Endothelial cell of umbilical vein (primary cell): ENCODE measurements at regions of chr4 and their contacts with region 1.

Region 1: GRCh38 chr4:156968479-156968984 is 3.1 kb downstream of the PDGFC start:
- DNase-seq: peak; percentile 81
- H3K4me3 ChIP-seq: no peak overlapping the region
- H3K27ac ChIP-seq: peak overlapping the region; percentile 20
- H3K4me1 ChIP-seq: peaks cover 30% of the 10 kb centered on the region
- H3K27me3 ChIP-seq: no peaks in the 10 kb centered on the region
- CTCF ChIP-seq: peak; percentile 64 to 77
- POLR2A ChIP-seq: no peak

Region 2: DNA sequence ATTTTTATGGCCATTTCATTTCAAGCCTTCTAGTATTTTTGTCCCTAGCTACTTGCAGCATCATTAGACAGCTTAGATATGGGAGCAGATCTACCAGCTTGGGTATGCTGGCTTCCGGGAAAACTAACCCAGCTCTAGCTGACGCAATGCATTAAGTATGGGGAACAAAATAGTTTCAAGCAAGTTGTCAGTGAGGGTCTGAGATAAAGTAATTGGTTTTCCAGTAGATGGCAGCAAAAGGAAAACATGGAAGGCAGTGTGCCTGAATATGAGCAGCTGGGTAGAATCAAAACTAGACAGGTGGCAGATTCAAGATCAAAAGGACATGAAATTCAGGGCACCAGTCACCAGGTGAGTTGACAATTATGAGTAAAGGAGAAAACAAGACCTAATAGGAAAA is 674.0 kb before region 1 on chr4:
- CTCF ChIA-PET with region 1: no interaction called
- POLR2A ChIA-PET with region 1: no interaction called
- dilution Hi-C with region 1: no loop called
- intact Hi-C with region 1: loop called (anchors 1 kb)
- DNase-seq: peak; percentile 43
- H3K4me3 ChIP-seq: no peak overlapping the region
- H3K27ac ChIP-seq: peak overlapping the region; percentile 29
- H3K4me1 ChIP-seq: peaks cover 7% of the 10 kb centered on the region
- H3K27me3 ChIP-seq: no peaks in the 10 kb centered on the region
- CTCF ChIP-seq: no peak
- POLR2A ChIP-seq: no peak

Region 3: GRCh38 chr4:156638334-156638733 is 330.2 kb before region 1 on chr4:
- CTCF ChIA-PET with region 1: no interaction called
- POLR2A ChIA-PET with region 1: no interaction called
- dilution Hi-C with region 1: no loop called
- intact Hi-C with region 1: no loop called
- DNase-seq: no peak
- H3K4me3 ChIP-seq: no peak overlapping the region
- H3K27ac ChIP-seq: no peak overlapping the region
- H3K4me1 ChIP-seq: no peaks in the 10 kb centered on the region
- H3K27me3 ChIP-seq: no peaks in the 10 kb centered on the region
- CTCF ChIP-seq: no peak
- POLR2A ChIP-seq: no peak

Region 4: DNA sequence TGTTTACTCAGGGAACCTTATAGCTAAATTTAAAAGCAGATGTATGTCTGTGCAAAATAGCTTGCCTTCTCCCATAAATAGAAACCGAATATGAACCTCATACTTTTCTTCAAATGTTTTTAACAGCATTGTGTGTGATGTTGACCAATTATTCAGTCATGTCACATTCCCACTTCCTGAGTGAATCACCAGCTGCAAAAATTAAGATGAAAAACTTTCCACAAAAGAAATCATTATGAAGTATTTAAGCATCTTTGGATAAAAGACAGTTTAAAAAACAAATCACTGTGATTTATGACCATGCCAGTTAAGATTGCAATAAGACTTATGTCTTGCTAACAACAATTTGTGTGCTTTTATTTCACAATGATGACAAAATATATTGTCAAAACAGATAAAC is 217.0 kb before region 1 on chr4:
- CTCF ChIA-PET with region 1: interaction called, 4 read pairs
- POLR2A ChIA-PET with region 1: no interaction called
- dilution Hi-C with region 1: no loop called
- intact Hi-C with region 1: loop called (anchors 5 kb)
- DNase-seq: peak; percentile 65
- H3K4me3 ChIP-seq: no peak overlapping the region
- H3K27ac ChIP-seq: no peak overlapping the region
- H3K4me1 ChIP-seq: peaks cover 7% of the 10 kb centered on the region
- H3K27me3 ChIP-seq: no peaks in the 10 kb centered on the region
- CTCF ChIP-seq: no peak
- POLR2A ChIP-seq: no peak

Region 5: DNA sequence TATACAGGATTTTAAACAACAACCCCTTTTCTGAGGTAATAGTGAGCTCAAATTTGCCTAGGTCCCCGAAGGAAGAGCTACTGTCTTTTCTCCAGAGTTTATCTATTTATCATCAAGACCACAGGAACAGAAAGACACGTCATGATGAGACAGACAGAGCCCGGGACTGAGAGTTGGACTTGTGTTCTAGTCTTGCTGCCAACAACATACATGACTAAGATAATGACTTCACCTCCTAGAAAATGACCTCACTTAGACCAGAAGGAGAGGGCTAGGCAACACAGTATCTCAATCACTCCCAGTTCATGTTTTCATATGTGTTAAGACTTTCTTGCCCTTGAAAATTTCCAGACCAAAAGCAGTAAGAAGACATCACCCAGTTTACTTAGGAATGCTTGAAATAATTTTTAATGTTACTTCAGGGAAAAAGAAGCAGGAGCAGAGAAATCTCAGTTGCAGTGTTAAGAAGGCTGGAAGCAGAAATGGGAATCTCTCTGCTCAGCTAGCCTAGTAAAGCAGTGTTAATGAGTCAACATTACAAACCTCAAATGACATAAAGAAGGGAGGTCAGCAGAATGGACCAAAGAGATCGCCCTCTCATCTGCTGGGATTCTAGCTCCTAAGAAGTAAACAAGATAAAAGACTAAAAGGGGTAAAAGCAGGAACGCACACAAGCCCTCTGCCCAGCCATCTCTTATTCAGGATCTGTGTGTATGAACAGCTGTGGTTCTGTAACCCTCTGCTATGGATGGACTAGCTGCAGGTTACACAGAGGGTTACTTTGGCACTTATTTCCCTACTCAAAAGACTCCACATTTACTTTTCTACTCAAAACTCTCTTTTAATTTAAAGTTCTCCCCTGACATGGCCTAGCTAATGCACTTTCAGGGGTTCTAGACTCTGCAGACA is 21.8 kb before region 1 on chr4:
- CTCF ChIA-PET with region 1: interaction called, 72 read pairs
- POLR2A ChIA-PET with region 1: no interaction called
- dilution Hi-C with region 1: no loop called
- intact Hi-C with region 1: loop called (anchors 1 kb)
- DNase-seq: peak; percentile 89
- H3K4me3 ChIP-seq: no peak overlapping the region
- H3K27ac ChIP-seq: peak overlapping the region; percentile 84
- H3K4me1 ChIP-seq: peaks cover 60% of the 10 kb centered on the region
- H3K27me3 ChIP-seq: no peaks in the 10 kb centered on the region
- CTCF ChIP-seq: no peak
- POLR2A ChIP-seq: no peak

Region 6: DNA sequence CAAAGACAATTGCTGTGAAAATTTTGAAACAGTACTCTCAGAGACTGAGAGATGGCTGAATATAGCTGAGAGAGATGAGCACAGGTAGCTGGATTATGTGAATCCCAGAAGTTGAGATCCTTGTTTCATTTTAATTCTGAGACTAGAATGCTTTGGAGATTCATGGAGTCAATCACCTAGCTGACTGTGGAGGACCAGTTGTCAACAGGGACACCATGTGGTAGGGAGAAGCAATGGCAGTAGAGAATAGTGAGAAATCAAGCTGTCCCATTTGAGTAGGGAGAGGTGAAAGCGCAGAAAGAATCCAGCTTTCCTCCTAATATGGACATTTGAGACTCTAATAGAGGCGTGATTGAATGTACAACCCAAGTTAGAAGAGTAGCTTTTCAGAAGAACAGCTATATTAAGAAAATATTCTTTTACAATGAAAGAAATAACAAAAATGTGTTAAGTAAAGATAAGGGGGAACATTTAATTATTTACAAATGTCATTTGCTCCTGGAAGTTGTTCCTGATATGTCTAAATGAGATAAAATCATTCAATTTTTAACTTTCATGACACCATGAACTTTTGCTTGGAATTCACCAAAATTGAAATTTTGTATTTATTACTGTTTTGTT is 77.1 kb after region 1 on chr4:
- CTCF ChIA-PET with region 1: interaction called, 119 read pairs
- POLR2A ChIA-PET with region 1: no interaction called
- dilution Hi-C with region 1: no loop called
- intact Hi-C with region 1: loop called (anchors 1 kb)
- DNase-seq: peak; percentile 71
- H3K4me3 ChIP-seq: no peak overlapping the region
- H3K27ac ChIP-seq: no peak overlapping the region
- H3K4me1 ChIP-seq: no peaks in the 10 kb centered on the region
- H3K27me3 ChIP-seq: no peaks in the 10 kb centered on the region
- CTCF ChIP-seq: peak; percentile 72 to 77
- POLR2A ChIP-seq: no peak

Region 7: GRCh38 chr4:157978680-157979361 is 1010.3 kb after region 1 on chr4:
- CTCF ChIA-PET with region 1: interaction called, 6 read pairs
- POLR2A ChIA-PET with region 1: no interaction called
- dilution Hi-C with region 1: no loop called
- intact Hi-C with region 1: loop called (anchors 1 kb)
- DNase-seq: peak; percentile 82
- H3K4me3 ChIP-seq: peak overlapping the region in 2 of 3 experiments; percentile 18 to 75
- H3K27ac ChIP-seq: peak overlapping the region; percentile 44
- H3K4me1 ChIP-seq: peaks cover 29% of the 10 kb centered on the region
- H3K27me3 ChIP-seq: no peaks in the 10 kb centered on the region
- CTCF ChIP-seq: peak; percentile 61 to 67
- POLR2A ChIP-seq: no peak